Activated CD8-positive, alpha-beta T cell treated with anti-CD3 and anti-CD28 coated beads, Interleukin-2, amount 10 ng/mL, durations not matched to agents 7 days and 5 days (primary cell): ENCODE measurements at regions of chr5 and their contacts with region 1.

Region 1: GRCh38 chr5:132820162-132820754 is 7.2 kb downstream of the SOWAHA start:
- DNase-seq: peak; percentile 95
- ATAC-seq: peak; percentile 92
- H3K4me3 Mint-ChIP-seq: peak overlapping the region; percentile 59
- H3K27ac Mint-ChIP-seq: no peak overlapping the region
- H3K4me1 Mint-ChIP-seq: peaks cover 33% of the 10 kb centered on the region
- H3K27me3 Mint-ChIP-seq: peaks cover 18% of the 10 kb centered on the region

Region 2: GRCh38 chr5:132500931-132501630 is 319.2 kb before region 1 on chr5:
- CTCF ChIA-PET with region 1: interaction called, 25 read pairs
- POLR2A ChIA-PET with region 1: interaction called, 3 read pairs
- DNase-seq: peak; percentile 85
- ATAC-seq: peak; percentile 25
- H3K4me3 Mint-ChIP-seq: no peak overlapping the region
- H3K27ac Mint-ChIP-seq: peak overlapping the region; percentile 81
- H3K4me1 Mint-ChIP-seq: peaks cover 45% of the 10 kb centered on the region
- H3K27me3 Mint-ChIP-seq: peaks cover 5% of the 10 kb centered on the region

Region 3: GRCh38 chr5:132591145-132591544 is 229.1 kb before region 1 on chr5:
- CTCF ChIA-PET with region 1: interaction called, 14 read pairs
- POLR2A ChIA-PET with region 1: no interaction called
- DNase-seq: no peak
- ATAC-seq: no peak
- H3K4me3 Mint-ChIP-seq: no peak overlapping the region
- H3K27ac Mint-ChIP-seq: no peak overlapping the region
- H3K4me1 Mint-ChIP-seq: no peaks in the 10 kb centered on the region
- H3K27me3 Mint-ChIP-seq: no peaks in the 10 kb centered on the region

Region 4: GRCh38 chr5:132674671-132675506 is 145.4 kb before region 1 on chr5:
- CTCF ChIA-PET with region 1: interaction called, 10 read pairs
- POLR2A ChIA-PET with region 1: no interaction called
- DNase-seq: no peak
- ATAC-seq: peak; percentile 38
- H3K4me3 Mint-ChIP-seq: peak overlapping the region; percentile 35
- H3K27ac Mint-ChIP-seq: peak overlapping the region; percentile 79
- H3K4me1 Mint-ChIP-seq: peaks cover 41% of the 10 kb centered on the region
- H3K27me3 Mint-ChIP-seq: no peaks in the 10 kb centered on the region

Region 5: GRCh38 chr5:132791026-132791425 is 29.2 kb before region 1 on chr5:
- CTCF ChIA-PET with region 1: interaction called, 11 read pairs
- POLR2A ChIA-PET with region 1: no interaction called
- DNase-seq: no peak
- ATAC-seq: no peak
- H3K4me3 Mint-ChIP-seq: no peak overlapping the region
- H3K27ac Mint-ChIP-seq: no peak overlapping the region
- H3K4me1 Mint-ChIP-seq: no peaks in the 10 kb centered on the region
- H3K27me3 Mint-ChIP-seq: peaks cover 25% of the 10 kb centered on the region

Region 6: GRCh38 chr5:132883261-132883834 is 63.1 kb after region 1 on chr5:
- CTCF ChIA-PET with region 1: interaction called, 14 read pairs
- POLR2A ChIA-PET with region 1: no interaction called
- DNase-seq: peak; percentile 48
- ATAC-seq: peak; percentile 67
- H3K4me3 Mint-ChIP-seq: no peak overlapping the region
- H3K27ac Mint-ChIP-seq: no peak overlapping the region
- H3K4me1 Mint-ChIP-seq: no peaks in the 10 kb centered on the region
- H3K27me3 Mint-ChIP-seq: no peaks in the 10 kb centered on the region

Region 7: GRCh38 chr5:133086366-133086875 is 266.2 kb after region 1 on chr5:
- CTCF ChIA-PET with region 1: no interaction called
- POLR2A ChIA-PET with region 1: no interaction called
- DNase-seq: no peak
- ATAC-seq: no peak
- H3K4me3 Mint-ChIP-seq: no peak overlapping the region
- H3K27ac Mint-ChIP-seq: no peak overlapping the region
- H3K4me1 Mint-ChIP-seq: peaks cover 4% of the 10 kb centered on the region
- H3K27me3 Mint-ChIP-seq: no peaks in the 10 kb centered on the region